Activated naive CD4-positive, alpha-beta T cell treated with anti-CD3 and anti-CD28 coated beads, Interleukin-2, amount 10 ng/mL, durations not matched to agents 7 days and 5 days (primary cell): ENCODE measurements at regions of chr3 and their contacts with region 1.

Region 1: GRCh38 chr3:63818281-63819150 is 583 bp upstream of the C3orf49 start:
- DNase-seq: peak; percentile 69
- H3K4me3 Mint-ChIP-seq: no peak overlapping the region
- H3K27ac Mint-ChIP-seq: no peak overlapping the region
- H3K4me1 Mint-ChIP-seq: no peaks in the 10 kb centered on the region
- H3K27me3 Mint-ChIP-seq: no peaks in the 10 kb centered on the region

Region 2: GRCh38 chr3:63349583-63350521 is 468.7 kb before region 1 on chr3:
- CTCF ChIA-PET with region 1: interaction called, 68 read pairs
- DNase-seq: peak; percentile 63
- H3K4me3 Mint-ChIP-seq: no peak overlapping the region
- H3K27ac Mint-ChIP-seq: no peak overlapping the region
- H3K4me1 Mint-ChIP-seq: no peaks in the 10 kb centered on the region
- H3K27me3 Mint-ChIP-seq: no peaks in the 10 kb centered on the region

Region 3: GRCh38 chr3:63896332-63897030 is 78.0 kb after region 1 on chr3:
- CTCF ChIA-PET with region 1: no interaction called
- DNase-seq: no peak
- H3K4me3 Mint-ChIP-seq: no peak overlapping the region
- H3K27ac Mint-ChIP-seq: no peak overlapping the region
- H3K4me1 Mint-ChIP-seq: peaks cover 27% of the 10 kb centered on the region
- H3K27me3 Mint-ChIP-seq: no peaks in the 10 kb centered on the region